Mammary epithelial cell (primary cell): ENCODE measurements at regions of chr9 and their contacts with region 1.

Region 1: GRCh38 chr9:137029058-137029936 is 1.3 kb upstream of the ABCA2 start:
- DNase-seq: peak; percentile 50
- H3K4me3 ChIP-seq: peak overlapping the region in 1 of 3 experiments; percentile 57
- H3K27ac ChIP-seq: no peak overlapping the region
- H3K4me1 ChIP-seq: peaks cover 42% of the 10 kb centered on the region
- H3K27me3 ChIP-seq: no peaks in the 10 kb centered on the region
- CTCF ChIP-seq: peak; percentile 88 to 90

Region 2: GRCh38 chr9:136665111-136665703 is 364.1 kb before region 1 on chr9:
- CTCF ChIA-PET with region 1: no interaction called
- dilution Hi-C with region 1: no loop called
- in situ Hi-C with region 1: no loop called
- intact Hi-C with region 1: no loop called
- DNase-seq: no peak
- H3K4me3 ChIP-seq: peak overlapping the region in 2 of 3 experiments; percentile 25 to 38
- H3K27ac ChIP-seq: no peak overlapping the region
- H3K4me1 ChIP-seq: peaks cover 6% of the 10 kb centered on the region
- H3K27me3 ChIP-seq: no peaks in the 10 kb centered on the region
- CTCF ChIP-seq: no peak

Region 3: GRCh38 chr9:136807281-136808074 is 221.8 kb before region 1 on chr9 and contains the start of gene RABL6:
- CTCF ChIA-PET with region 1: no interaction called
- dilution Hi-C with region 1: loop called (anchors 5 kb)
- in situ Hi-C with region 1: no loop called
- intact Hi-C with region 1: no loop called
- DNase-seq: peak; percentile 66
- H3K4me3 ChIP-seq: peak within 1 kb of the TSS; percentile 74 to 93 (median 87)
- H3K27ac ChIP-seq: peak within 1 kb of the TSS; percentile 39
- H3K4me1 ChIP-seq: peaks cover 24% of the 10 kb centered on the region
- H3K27me3 ChIP-seq: no peaks in the 10 kb centered on the region
- CTCF ChIP-seq: no peak
- total RNA-seq, gene RABL6: 53.8 to 84.3 TPM

Region 4: DNA sequence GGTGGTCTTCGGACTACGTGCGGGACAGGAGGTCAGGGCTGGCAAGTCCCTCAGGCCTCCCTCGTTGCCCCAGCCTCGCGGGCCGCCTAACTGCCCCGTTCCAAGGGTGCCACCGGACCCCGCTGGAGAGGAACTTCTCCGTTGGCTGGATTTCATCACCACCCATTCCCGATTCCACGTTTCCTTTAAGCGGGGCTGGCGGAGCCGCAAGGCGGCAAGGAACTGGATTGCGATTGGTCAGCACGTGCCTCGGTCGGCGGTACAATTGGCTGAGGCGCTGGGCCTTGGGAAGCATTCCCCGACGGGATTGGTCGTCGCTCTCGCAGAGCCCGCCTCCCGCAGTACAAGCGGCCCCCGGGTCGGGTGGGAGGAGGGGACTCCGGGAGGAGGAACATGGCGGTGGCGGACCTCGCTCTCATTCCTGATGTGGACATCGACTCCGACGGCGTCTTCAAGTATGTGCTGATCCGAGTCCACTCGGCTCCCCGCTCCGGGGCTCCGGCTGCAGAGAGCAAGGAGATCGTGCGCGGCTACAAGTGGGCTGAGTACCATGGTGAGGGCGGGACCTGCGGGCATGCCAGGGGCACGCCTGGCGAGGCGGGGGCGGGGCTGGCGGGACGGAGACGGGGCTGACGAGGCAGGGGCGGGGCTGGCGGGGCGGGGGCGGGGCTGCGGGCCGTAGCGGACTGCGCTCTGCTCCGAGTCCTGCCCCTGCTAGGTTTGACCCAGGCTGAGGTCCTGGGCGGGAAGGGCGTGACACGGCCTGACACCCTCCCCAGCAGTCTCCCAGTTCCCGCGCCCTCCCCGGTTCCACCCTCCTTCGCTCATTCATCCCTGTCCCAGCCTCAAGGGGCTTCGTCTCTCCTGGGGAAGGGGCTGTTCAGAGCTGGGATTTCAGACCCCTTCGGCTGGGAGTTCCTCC is 180.0 kb before region 1 on chr9 and contains the start of gene PHPT1:
- CTCF ChIA-PET with region 1: no interaction called
- dilution Hi-C with region 1: loop called (anchors 5 kb)
- in situ Hi-C with region 1: no loop called
- intact Hi-C with region 1: loop called (anchors 1 kb)
- DNase-seq: peak; percentile 98
- H3K4me3 ChIP-seq: peak within 1 kb of the TSS; percentile 82 to 93 (median 92)
- H3K27ac ChIP-seq: peak within 1 kb of the TSS; percentile 67
- H3K4me1 ChIP-seq: peaks cover 19% of the 10 kb centered on the region
- H3K27me3 ChIP-seq: peaks cover 22% of the 10 kb centered on the region
- CTCF ChIP-seq: no peak
- total RNA-seq, gene PHPT1: 55.3 to 143 TPM

Region 5: DNA sequence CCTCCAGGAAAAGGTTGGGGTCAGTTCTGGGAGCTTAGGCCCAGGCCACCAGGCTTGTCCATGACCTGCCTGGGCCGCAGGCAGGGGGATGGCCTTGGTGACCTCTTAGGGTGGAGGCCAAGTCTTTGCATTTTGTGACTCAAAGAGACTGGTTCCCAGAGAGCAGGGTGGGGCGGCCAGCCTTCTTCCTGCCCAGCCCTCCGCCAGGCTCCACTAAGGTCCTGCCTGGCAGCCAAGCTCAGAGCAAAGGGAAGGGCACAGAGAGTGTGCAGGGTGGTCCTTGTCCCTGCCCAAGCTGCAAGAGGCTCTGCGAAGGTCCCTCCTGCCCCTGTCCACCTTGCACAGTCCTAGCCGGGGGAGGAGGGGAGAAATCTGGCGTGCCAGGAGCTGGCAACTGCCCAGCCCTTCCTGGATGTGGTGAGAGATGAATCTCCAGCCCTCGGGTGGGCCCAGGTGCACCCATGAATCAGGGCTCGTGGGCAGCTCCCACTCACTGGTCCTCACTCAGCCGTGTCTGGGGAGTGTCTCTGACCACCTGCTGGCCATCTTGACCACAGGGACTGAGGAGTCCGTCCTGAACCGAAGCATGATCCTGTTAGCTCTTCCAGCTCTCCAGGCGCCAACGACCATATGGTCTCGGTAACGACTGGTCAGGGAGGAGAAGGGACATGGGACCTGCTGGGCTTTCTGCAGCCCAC is 54.3 kb before region 1 on chr9:
- CTCF ChIA-PET with region 1: interaction called, 4 read pairs
- dilution Hi-C with region 1: loop called (anchors 5 kb)
- in situ Hi-C with region 1: no loop called
- intact Hi-C with region 1: no loop called
- DNase-seq: no peak
- H3K4me3 ChIP-seq: no peak overlapping the region
- H3K27ac ChIP-seq: no peak overlapping the region
- H3K4me1 ChIP-seq: peaks cover 16% of the 10 kb centered on the region
- H3K27me3 ChIP-seq: no peaks in the 10 kb centered on the region
- CTCF ChIP-seq: no peak

Region 6: DNA sequence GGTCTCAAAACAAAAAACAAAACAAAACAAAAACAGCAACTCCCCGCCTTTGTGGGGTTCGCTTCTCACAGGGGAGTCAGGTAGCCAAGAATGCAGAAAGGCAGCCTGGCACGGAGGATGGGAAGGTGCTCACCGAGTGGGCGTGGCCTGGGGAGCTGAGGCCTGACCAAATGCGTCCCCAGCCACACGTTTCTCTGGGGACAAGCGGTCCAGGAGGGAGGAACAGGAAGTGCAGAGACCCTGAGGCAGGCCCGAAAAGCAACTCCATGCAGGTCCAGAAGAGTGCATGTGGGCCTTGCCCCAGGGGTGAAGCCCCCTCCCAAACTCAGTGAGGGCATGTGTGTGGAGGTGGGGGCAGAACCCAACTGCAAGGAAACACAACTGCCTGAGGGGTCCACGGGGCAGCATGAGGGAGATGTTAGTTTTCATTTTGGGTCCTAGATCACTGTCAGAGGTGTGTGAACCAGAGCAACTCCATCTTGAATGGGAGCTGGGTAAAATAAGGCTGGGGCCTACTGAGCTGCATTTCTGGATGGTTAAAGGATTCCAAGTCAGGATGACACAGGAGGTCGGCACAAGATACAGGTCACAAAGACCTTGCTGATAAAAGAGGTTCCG is 45.5 kb after region 1 on chr9:
- CTCF ChIA-PET with region 1: no interaction called
- dilution Hi-C with region 1: no loop called
- in situ Hi-C with region 1: no loop called
- intact Hi-C with region 1: no loop called
- DNase-seq: no peak
- H3K4me3 ChIP-seq: no peak overlapping the region
- H3K27ac ChIP-seq: no peak overlapping the region
- H3K4me1 ChIP-seq: peaks cover 18% of the 10 kb centered on the region
- H3K27me3 ChIP-seq: no peaks in the 10 kb centered on the region
- CTCF ChIP-seq: no peak

Region 7: GRCh38 chr9:137086531-137087408 is 57.5 kb after region 1 on chr9 and contains the start of gene MAN1B1:
- CTCF ChIA-PET with region 1: interaction called, 5 read pairs
- dilution Hi-C with region 1: loop called (anchors 5 kb)
- in situ Hi-C with region 1: no loop called
- intact Hi-C with region 1: no loop called
- DNase-seq: peak; percentile 100
- H3K4me3 ChIP-seq: peak within 1 kb of the TSS; percentile 83 to 85 (median 85)
- H3K27ac ChIP-seq: peak within 1 kb of the TSS; percentile 83
- H3K4me1 ChIP-seq: peaks cover 46% of the 10 kb centered on the region
- H3K27me3 ChIP-seq: no peaks in the 10 kb centered on the region
- CTCF ChIP-seq: no peak
- total RNA-seq, gene MAN1B1: 62.3 to 67.0 TPM